H1 (cell line): ENCODE measurements at regions of chr2 and their contacts with region 1.

Region 1: DNA sequence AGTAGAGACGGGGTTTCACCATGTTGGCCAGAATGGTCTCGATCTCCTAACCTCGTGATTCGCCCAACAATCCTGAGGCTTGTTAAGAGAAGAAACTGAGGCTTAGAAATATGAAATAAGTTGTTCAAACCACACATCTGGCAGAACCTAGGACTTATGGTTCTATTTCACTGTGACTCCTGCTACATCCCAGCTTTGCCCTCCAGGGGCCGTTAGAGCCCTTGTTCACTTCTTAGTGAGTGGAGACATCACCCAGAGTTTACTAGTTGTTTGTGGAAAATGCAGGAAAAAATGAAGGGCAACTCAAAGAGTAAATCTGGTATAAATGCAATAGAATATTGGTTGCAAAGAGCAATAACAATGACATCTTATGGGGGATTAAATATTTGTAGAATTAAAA is 43.9 kb downstream of the MARCHF4 start:
- DNase-seq: no peak
- H3K4me3 ChIP-seq: no peak overlapping the region
- H3K27ac ChIP-seq: no peak overlapping the region
- H3K4me1 ChIP-seq: peaks cover 0 to 4% (median 1%) of the 10 kb centered on the region in 4 experiments; a peak in 2 of 7 replicates
- H3K27me3 ChIP-seq: no peaks in the 10 kb centered on the region
- CTCF ChIP-seq: peak; percentile 17 to 63 (median 59)
- EP300 ChIP-seq: no peak
- POLR2A ChIP-seq: no peak
- RAD21 ChIP-seq: peak; percentile 78 to 83

Region 2: GRCh38 chr2:216343216-216343980 is 15.1 kb after region 1 on chr2:
- CTCF ChIA-PET with region 1: interaction called, 24 read pairs
- POLR2A ChIA-PET with region 1: interaction called, 6 read pairs
- DNase-seq: no peak
- H3K4me3 ChIP-seq: no peak overlapping the region
- H3K27ac ChIP-seq: no peak overlapping the region
- H3K4me1 ChIP-seq: peaks cover 11 to 39% (median 32%) of the 10 kb centered on the region in 4 experiments
- H3K27me3 ChIP-seq: no peaks in the 10 kb centered on the region
- CTCF ChIP-seq: no peak
- EP300 ChIP-seq: no peak
- POLR2A ChIP-seq: no peak
- RAD21 ChIP-seq: no peak

Region 3: DNA sequence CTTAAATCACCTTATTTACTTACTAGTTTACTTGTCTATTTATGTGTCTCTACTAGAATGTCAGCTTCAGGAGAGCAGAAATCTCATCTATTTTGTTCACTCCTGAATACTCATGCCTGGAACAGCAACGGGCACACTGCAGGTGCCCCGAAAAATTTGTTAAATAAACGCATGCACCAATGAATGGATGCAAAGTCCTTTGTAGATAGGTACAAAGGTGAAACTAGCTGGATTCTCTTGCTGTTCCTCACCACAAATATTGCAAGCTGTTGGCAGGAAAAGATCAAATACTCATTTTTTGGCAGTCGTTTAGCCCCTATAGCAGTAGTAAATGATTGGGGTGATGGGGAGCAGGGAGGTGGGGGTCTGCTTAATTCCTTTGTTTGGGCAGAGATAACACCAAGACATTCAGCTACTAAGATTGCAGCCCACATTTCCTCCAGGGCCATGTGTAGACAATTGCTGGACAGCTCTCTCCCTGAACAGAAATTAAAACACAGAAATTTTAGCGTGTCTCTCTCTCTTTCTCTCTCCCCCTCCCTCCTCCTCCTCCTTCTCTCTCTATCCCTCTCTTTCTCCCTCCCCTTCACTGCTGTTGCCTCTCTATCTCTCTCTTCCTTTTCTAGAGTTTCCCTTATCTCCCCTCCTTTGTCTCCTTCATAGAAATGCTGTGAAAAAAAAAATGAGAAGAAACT is 38.6 kb after region 1 on chr2:
- CTCF ChIA-PET with region 1: interaction called, 11 read pairs
- POLR2A ChIA-PET with region 1: interaction called, 3 read pairs
- DNase-seq: no peak
- H3K4me3 ChIP-seq: no peak overlapping the region
- H3K27ac ChIP-seq: no peak overlapping the region
- H3K4me1 ChIP-seq: peaks cover 3 to 16% (median 4%) of the 10 kb centered on the region in 4 experiments; a peak in 5 of 7 replicates
- H3K27me3 ChIP-seq: peaks cover 0 to 3% (median 0%) of the 10 kb centered on the region in 4 experiments; a peak in 4 of 7 replicates
- CTCF ChIP-seq: no peak
- EP300 ChIP-seq: no peak
- POLR2A ChIP-seq: no peak
- RAD21 ChIP-seq: no peak

Region 4: GRCh38 chr2:216445501-216445900 is 117.2 kb after region 1 on chr2:
- CTCF ChIA-PET with region 1: no interaction called
- POLR2A ChIA-PET with region 1: no interaction called
- DNase-seq: no peak
- H3K4me3 ChIP-seq: no peak overlapping the region
- H3K27ac ChIP-seq: no peak overlapping the region
- H3K4me1 ChIP-seq: peaks cover 0 to 5% (median 2%) of the 10 kb centered on the region in 4 experiments; a peak in 2 of 7 replicates
- H3K27me3 ChIP-seq: peaks cover 0 to 2% (median 0%) of the 10 kb centered on the region in 4 experiments; a peak in 1 of 7 replicates
- CTCF ChIP-seq: no peak
- EP300 ChIP-seq: no peak
- POLR2A ChIP-seq: no peak
- RAD21 ChIP-seq: no peak